ENCODE measurements at regions of chr9 and their contacts with region 1.

Region 1: DNA sequence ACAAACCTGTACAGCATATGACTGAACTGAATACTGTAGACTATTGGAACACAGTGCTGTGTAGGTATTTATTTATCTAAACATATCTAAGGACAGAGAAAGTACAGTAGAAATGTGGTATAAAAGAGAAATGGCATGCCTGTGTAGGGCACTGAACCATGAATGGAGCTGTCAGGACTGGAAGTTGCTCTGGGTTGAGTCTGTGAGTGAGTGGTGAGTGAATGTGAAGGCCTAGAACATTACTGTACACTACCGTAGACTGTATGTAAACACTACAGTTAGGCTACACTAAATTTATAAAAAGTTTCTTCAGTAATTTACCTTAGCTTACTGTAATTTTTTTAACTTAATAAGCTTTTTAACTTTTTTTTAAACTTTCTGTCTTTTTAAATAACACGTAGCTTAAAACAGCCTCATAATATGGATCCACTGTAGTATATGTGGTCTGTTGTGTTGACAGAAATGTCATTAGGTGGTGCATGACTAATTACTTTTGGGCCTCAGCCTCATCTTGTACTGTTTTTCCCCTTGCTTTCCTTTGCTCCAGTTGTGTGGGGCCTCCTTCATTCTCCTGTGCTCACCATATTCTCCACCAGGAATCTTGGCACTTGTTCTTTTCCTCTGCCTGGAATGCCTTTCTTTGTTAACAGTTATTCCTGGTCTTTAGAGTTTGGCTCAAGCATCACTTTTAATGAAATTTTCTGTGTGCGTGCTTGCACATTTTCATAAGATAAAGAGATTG is 8.8 kb downstream of the SPIN1 start:
- DNase-seq: peak in 1 of 2 experiments; percentile 33
- H3K4me3 ChIP-seq: no peak overlapping the region
- H3K27ac ChIP-seq: no peak overlapping the region
- H3K4me1 ChIP-seq: peaks cover 2 to 11% (median 8%) of the 10 kb centered on the region in 4 experiments; a peak in 4 of 7 replicates
- H3K27me3 ChIP-seq: no peaks in the 10 kb centered on the region
- CTCF ChIP-seq: no peak
- EP300 ChIP-seq: no peak
- POLR2A ChIP-seq: peak in 1 of 2 experiments; percentile 18; a peak in 1 of 3 replicates
- RAD21 ChIP-seq: no peak

Region 2: GRCh38 chr9:88251903-88252302 is 145.1 kb before region 1 on chr9:
- CTCF ChIA-PET with region 1: no interaction called
- POLR2A ChIA-PET with region 1: no interaction called
- DNase-seq: no peak
- H3K4me3 ChIP-seq: no peak overlapping the region
- H3K27ac ChIP-seq: no peak overlapping the region
- H3K4me1 ChIP-seq: no peaks in the 10 kb centered on the region
- H3K27me3 ChIP-seq: no peaks in the 10 kb centered on the region
- CTCF ChIP-seq: no peak
- EP300 ChIP-seq: no peak
- POLR2A ChIP-seq: no peak
- RAD21 ChIP-seq: no peak

Region 3: DNA sequence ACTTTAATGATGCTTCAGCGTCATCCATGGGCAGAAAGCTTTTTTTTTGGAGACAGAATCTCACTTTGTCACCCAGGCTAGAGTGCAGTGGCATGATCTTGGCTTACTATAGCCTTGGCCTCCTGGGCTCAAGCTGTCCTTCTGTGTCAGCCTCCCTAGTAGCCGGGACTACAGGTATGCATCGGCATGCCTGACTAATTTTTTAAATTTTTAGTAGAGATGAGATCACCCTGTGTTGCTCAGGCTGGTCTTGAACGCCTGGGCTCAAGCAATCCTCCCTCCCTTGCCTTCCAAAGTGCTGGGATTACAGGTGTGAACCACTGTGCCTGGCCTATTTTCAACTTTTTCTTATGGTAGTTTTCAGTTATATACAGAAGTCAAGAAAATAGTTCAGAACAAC is 14.5 kb after region 1 on chr9:
- CTCF ChIA-PET with region 1: interaction called, 5 read pairs
- POLR2A ChIA-PET with region 1: interaction called, 12 read pairs
- DNase-seq: no peak
- H3K4me3 ChIP-seq: no peak overlapping the region
- H3K27ac ChIP-seq: no peak overlapping the region
- H3K4me1 ChIP-seq: no peaks in the 10 kb centered on the region
- H3K27me3 ChIP-seq: no peaks in the 10 kb centered on the region
- CTCF ChIP-seq: no peak
- EP300 ChIP-seq: no peak
- POLR2A ChIP-seq: no peak
- RAD21 ChIP-seq: no peak

Measured in H1 (cell line).